Esophagus muscularis mucosa (tissue), 4 donors: ENCODE measurements at regions of chrX and their contacts with region 1.

Region 1: GRCh38 chrX:103464774-103465117 is 54.5 kb downstream of the RAB40A start:
- DNase-seq: peak; percentile 93
- H3K4me3 ChIP-seq: peak overlapping the region; percentile 35 to 45 (median 38)
- H3K27ac ChIP-seq: no peak overlapping the region
- H3K4me1 ChIP-seq: peaks cover 0 to 3% (median 0%) of the 10 kb centered on the region in 4 donors
- H3K27me3 ChIP-seq: no peaks in the 10 kb centered on the region
- CTCF ChIP-seq: peak; percentile 66 to 75 (median 74)
- EP300 ChIP-seq: no peak
- POLR2A ChIP-seq: no peak

Region 2: DNA sequence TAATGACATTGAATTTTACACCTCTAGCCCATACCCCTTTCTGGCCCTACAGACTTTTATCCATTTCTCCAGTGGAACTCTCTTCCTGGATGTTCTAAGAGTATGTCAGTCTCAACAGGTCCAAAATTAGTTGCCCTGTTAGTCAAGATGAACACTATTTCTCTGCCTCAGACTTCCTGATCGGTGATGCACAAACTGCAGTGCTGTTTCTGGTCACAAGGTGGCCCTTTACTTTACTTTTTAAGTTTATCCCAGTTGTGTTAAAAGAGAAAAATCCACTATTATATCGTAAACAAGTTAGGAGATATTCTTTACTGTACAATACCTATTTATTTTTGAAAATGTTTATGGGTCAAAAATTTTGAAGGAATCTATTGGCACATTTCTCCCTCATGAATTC is 121.6 kb before region 1 on chrX:
- intact Hi-C with region 1: loop called (anchors 1 kb)
- DNase-seq: no peak
- H3K4me3 ChIP-seq: no peak overlapping the region
- H3K27ac ChIP-seq: no peak overlapping the region
- H3K4me1 ChIP-seq: no peaks in the 10 kb centered on the region
- H3K27me3 ChIP-seq: peaks cover 0 to 9% (median 3%) of the 10 kb centered on the region in 4 donors
- CTCF ChIP-seq: peak; percentile 65 to 73 (median 71)
- EP300 ChIP-seq: no peak
- POLR2A ChIP-seq: no peak